IMR-90 (cell line): ENCODE measurements at regions of chr19 and their contacts with region 1.

Region 1: GRCh38 chr19:34677386-34678084 is at the start of gene ZNF302:
- DNase-seq: peak; percentile 96
- ATAC-seq: peak; percentile 98
- H3K4me3 ChIP-seq: peak within 1 kb of the TSS; percentile 74
- H3K27ac ChIP-seq: peak within 1 kb of the TSS; percentile 97
- H3K4me1 ChIP-seq: peaks cover 3% of the 10 kb centered on the region; the same call in 1 of the 2 replicates
- H3K27me3 ChIP-seq: no peaks in the 10 kb centered on the region
- CTCF ChIP-seq: no peak
- POLR2A ChIP-seq: peak; percentile 92
- RAD21 ChIP-seq: no peak
- total RNA-seq, gene ZNF302: 9.5 and 11.1 TPM in 2 replicates

Region 2: DNA sequence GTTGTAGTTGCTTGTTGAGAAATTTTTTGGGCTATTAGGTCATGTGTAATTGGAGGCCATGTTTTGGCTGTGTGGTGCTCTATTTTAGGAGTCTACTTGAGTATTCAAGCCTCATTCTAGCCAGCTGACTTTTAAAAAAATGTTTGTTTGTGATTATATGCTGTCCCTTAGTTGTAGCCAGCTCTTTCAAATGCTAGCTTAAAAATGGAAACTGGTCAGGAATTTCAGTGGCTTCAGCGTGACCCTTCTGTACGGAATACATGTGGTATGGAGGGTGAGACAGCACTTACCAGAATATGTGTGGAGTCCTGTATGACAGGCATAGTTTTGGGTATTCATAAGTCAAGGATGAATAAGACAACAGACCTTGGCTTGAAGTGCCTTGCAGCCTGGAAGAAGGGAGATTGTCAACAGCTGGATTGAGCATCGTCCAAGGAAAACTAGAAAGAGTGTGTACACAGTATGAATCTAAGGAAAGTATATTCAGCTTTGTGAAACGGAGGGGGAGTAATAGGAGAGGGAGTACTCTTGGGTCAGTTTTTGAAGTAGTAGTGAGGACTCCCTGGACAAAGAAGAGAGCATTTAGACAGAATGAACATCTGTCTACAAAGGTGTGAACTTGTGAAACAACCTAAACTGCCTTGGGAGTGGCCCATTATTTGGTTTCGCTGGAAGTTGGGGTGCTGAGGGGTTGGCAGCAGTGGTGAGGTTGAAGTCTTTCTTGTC is 216.0 kb before region 1 on chr19:
- CTCF ChIA-PET with region 1: no interaction called
- POLR2A ChIA-PET with region 1: no interaction called
- dilution Hi-C with region 1: no loop called
- in situ Hi-C with region 1: no loop called
- intact Hi-C with region 1: no loop called
- DNase-seq: peak; percentile 65
- ATAC-seq: peak; percentile 77
- H3K4me3 ChIP-seq: no peak overlapping the region
- H3K27ac ChIP-seq: peak overlapping the region; percentile 57; the same call in 1 of the 2 replicates
- H3K4me1 ChIP-seq: peaks cover 8% of the 10 kb centered on the region
- H3K27me3 ChIP-seq: no peaks in the 10 kb centered on the region
- CTCF ChIP-seq: no peak
- POLR2A ChIP-seq: no peak
- RAD21 ChIP-seq: no peak

Region 3: GRCh38 chr19:34633802-34634201 is 43.7 kb before region 1 on chr19:
- CTCF ChIA-PET with region 1: no interaction called
- POLR2A ChIA-PET with region 1: no interaction called
- dilution Hi-C with region 1: no loop called
- in situ Hi-C with region 1: no loop called
- intact Hi-C with region 1: no loop called
- DNase-seq: no peak
- ATAC-seq: no peak
- H3K4me3 ChIP-seq: no peak overlapping the region
- H3K27ac ChIP-seq: no peak overlapping the region
- H3K4me1 ChIP-seq: no peaks in the 10 kb centered on the region
- H3K27me3 ChIP-seq: no peaks in the 10 kb centered on the region
- CTCF ChIP-seq: no peak
- POLR2A ChIP-seq: no peak
- RAD21 ChIP-seq: no peak

Region 4: GRCh38 chr19:34667349-34668076 is 10.0 kb before region 1 on chr19:
- CTCF ChIA-PET with region 1: no interaction called
- POLR2A ChIA-PET with region 1: no interaction called
- dilution Hi-C with region 1: no loop called
- in situ Hi-C with region 1: no loop called
- intact Hi-C with region 1: loop called (anchors 1 kb)
- DNase-seq: peak; percentile 27
- ATAC-seq: peak; percentile 59
- H3K4me3 ChIP-seq: peak overlapping the region; percentile 69
- H3K27ac ChIP-seq: peak overlapping the region; percentile 79
- H3K4me1 ChIP-seq: peaks cover 5% of the 10 kb centered on the region
- H3K27me3 ChIP-seq: no peaks in the 10 kb centered on the region
- CTCF ChIP-seq: no peak
- POLR2A ChIP-seq: no peak
- RAD21 ChIP-seq: no peak

Region 5: GRCh38 chr19:34733826-34734600 is 56.5 kb after region 1 on chr19 and contains the start of gene ZNF181:
- CTCF ChIA-PET with region 1: no interaction called
- POLR2A ChIA-PET with region 1: no interaction called
- dilution Hi-C with region 1: no loop called
- in situ Hi-C with region 1: no loop called
- intact Hi-C with region 1: loop called (anchors 1 kb)
- DNase-seq: peak; percentile 86
- ATAC-seq: peak; percentile 94
- H3K4me3 ChIP-seq: peak within 1 kb of the TSS; percentile 72
- H3K27ac ChIP-seq: peak within 1 kb of the TSS; percentile 94
- H3K4me1 ChIP-seq: peaks cover 8% of the 10 kb centered on the region
- H3K27me3 ChIP-seq: no peaks in the 10 kb centered on the region
- CTCF ChIP-seq: no peak
- POLR2A ChIP-seq: peak; percentile 81
- RAD21 ChIP-seq: no peak
- total RNA-seq, gene ZNF181: 7.5 and 11.1 TPM in 2 replicates